Sciatic nerve (tissue), 2 donors: ENCODE measurements at regions of chr22 and their contacts with region 1.

Region 1: GRCh38 chr22:39520054-39520891 is at the start of gene ATF4:
- DNase-seq: peak; percentile 98
- ATAC-seq: peak; percentile 95
- total RNA-seq, gene ATF4: 319 TPM

Region 2: DNA sequence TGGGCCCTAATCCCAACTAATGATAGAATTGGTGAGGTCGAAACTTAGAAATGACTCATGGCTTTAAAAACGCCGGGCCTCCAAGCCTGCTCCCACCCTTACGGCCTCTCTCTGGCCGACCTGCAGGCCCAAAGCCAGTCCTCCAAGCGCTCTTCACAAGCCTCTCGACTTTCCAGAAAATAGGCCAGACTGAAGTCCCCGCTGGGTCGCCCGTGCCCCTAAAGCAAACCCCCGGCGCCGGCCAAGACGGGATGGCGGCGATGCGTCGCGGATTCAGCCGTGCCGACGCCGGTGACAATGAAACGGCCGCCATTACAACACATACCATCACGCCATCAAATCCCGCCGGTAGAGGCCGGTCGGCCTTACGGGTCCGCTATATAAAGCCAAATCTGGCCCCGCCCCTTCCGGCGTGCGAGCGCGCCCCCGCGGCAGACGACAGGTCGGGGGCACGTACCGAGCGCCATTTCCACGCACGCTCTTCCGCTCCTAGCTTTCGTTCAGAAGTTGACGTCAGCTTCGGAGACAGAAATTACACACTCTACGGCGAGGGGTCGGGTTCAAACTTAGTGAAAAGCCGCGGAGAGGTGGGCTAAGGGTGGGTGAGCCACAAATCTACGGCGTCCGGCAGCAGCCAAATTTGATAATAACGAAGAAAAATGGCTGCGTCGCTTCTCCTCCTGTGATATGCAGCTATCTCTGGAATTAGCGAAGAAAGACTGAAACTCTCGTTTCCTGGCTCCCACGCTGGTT is 200.8 kb before region 1 on chr22 and contains the start of gene RPL3:
- intact Hi-C with region 1: loop called (anchors 10 kb)
- DNase-seq: peak; percentile 99
- ATAC-seq: peak; percentile 95
- total RNA-seq, gene RPL3: 1,341 TPM

Region 3: GRCh38 chr22:39405346-39406085 is 114.8 kb before region 1 on chr22:
- intact Hi-C with region 1: loop called (anchors 10 kb)
- DNase-seq: peak; percentile 82
- ATAC-seq: peak; percentile 77

Region 4: DNA sequence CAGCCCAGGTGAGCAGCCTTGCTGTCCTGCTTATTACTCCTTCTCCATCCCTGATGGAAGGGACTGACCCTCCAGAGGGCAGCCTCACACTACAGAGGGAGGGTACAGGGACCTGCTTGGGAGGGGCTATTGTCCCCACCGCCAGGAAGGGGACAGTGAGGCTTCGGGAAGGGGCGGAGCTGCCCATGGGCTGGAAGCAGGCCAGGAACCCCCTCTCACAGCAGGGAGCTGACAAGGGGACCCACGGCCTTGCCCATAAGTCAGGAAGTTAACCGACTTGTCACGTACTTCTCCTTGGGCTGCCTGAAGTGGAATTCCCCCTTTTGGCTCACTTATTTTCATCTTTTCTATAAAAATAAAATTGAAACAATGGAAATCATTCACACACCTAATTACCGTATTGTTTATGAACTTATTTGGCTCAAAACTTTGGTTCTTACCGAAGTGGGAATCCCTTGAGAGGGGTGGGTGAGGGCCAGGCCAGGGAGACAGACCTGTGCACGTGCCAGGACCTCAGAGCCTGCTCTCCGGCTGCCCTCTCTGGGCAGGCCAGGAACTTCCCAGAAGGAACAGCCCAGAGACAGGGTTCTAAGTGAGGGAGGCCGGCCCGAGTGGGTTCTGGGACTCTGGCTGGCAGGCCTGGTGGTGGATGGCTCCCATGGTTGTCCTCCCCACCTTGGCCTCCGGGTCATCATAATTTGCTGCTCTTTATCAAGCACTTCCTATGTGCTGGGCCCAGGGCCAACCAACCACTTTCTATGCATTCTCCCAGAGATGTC is 57.6 kb before region 1 on chr22:
- intact Hi-C with region 1: no loop called
- DNase-seq: no peak
- ATAC-seq: peak; percentile 3

Region 5: GRCh38 chr22:39634671-39635405 is 114.6 kb after region 1 on chr22:
- intact Hi-C with region 1: no loop called
- DNase-seq: no peak
- ATAC-seq: no peak